Adrenal gland (tissue), 19 donors: ENCODE measurements at regions of chr2 and their contacts with region 1.

Region 1: DNA sequence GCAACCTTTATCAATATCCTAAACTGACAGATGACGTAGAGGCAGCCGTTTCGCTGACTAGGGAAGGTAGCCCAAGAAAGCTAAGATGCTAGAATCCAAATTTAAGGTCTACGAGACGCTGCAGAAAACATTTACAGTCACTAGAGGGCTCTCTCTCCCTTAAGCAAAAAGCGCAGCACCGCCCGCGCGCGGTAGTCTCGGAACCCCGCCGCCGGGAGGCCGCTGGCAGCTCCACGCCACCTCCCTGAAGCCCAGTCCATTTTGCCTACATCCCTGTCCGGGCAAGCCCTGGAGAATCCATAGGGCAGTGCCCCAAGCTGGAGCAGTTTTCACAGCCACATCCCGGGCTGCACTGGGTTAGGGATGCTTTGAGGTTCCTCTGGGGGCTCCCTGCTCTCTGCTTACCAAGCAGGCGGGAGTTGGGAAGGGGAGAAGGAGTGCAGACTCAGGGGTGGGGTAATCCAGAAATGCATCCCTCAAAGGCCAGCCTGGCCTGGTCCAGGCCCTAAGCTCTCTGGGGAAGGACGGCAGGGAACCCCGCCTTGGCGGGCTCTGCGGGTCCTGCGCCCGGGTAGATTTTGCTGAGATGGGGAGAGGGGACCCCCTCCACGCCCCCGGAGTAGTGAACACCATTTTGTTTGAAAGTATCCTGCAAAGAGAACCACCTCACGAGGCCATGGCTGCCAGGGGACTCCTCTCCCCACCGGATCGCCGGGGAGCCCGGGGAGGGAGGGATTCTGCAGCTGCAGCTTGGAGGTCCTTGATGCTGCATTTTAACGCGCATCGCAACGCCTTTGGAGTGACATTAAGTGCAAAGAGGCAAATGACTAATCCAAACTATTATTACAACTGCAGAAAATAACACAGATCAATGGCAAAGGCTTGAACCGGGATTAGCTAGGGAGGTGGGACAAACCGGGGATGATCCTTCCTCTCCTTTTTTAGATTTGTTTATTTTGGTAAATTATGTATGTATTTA is 1.3 kb upstream of the DPYSL5 start:
- DNase-seq: peak; percentile 55 to 84 (median 64)
- H3K4me3 ChIP-seq: no peak overlapping the region
- H3K27ac ChIP-seq: no peak overlapping the region
- H3K4me1 ChIP-seq: peaks cover 14 to 28% of the 10 kb centered on the region in 2 donors
- H3K27me3 ChIP-seq: peaks cover 64% of the 10 kb centered on the region
- CTCF ChIP-seq: peak; percentile 68 to 82 (median 78)
- POLR2A ChIP-seq: no peak

Region 2: GRCh38 chr2:26561918-26562810 is 284.5 kb before region 1 on chr2:
- intact Hi-C with region 1: no loop called
- DNase-seq: peak in 6 of 7 donors; percentile 33 to 57 (median 44)
- H3K4me3 ChIP-seq: peak overlapping the region in 1 of 4 donors; percentile 51
- H3K27ac ChIP-seq: no peak overlapping the region
- H3K4me1 ChIP-seq: peaks cover 0 to 8% of the 10 kb centered on the region in 2 donors
- H3K27me3 ChIP-seq: peaks cover 33% of the 10 kb centered on the region
- CTCF ChIP-seq: peak in 3 of 6 experiments; percentile 11 to 33 (median 27)
- POLR2A ChIP-seq: no peak

Region 3: GRCh38 chr2:26735096-26735495 is 111.5 kb before region 1 on chr2:
- intact Hi-C with region 1: no loop called
- DNase-seq: peak; percentile 69 to 89 (median 81)
- H3K4me3 ChIP-seq: no peak overlapping the region
- H3K27ac ChIP-seq: peak overlapping the region; percentile 83 to 94 (median 85)
- H3K4me1 ChIP-seq: peaks cover 21 to 30% of the 10 kb centered on the region in 2 donors
- H3K27me3 ChIP-seq: no peaks in the 10 kb centered on the region
- CTCF ChIP-seq: no peak
- POLR2A ChIP-seq: peak in 1 of 2 donors; percentile 35

Region 4: GRCh38 chr2:26942543-26943295 is 96.1 kb after region 1 on chr2:
- intact Hi-C with region 1: loop called (anchors 2 kb)
- DNase-seq: peak; percentile 50 to 89 (median 73)
- H3K4me3 ChIP-seq: no peak overlapping the region
- H3K27ac ChIP-seq: no peak overlapping the region
- H3K4me1 ChIP-seq: no peaks in the 10 kb centered on the region
- H3K27me3 ChIP-seq: peaks cover 10% of the 10 kb centered on the region
- CTCF ChIP-seq: peak; percentile 52 to 87 (median 74)
- POLR2A ChIP-seq: no peak

Region 5: GRCh38 chr2:26993768-26994167 is 147.2 kb after region 1 on chr2:
- intact Hi-C with region 1: no loop called
- DNase-seq: no peak
- H3K4me3 ChIP-seq: no peak overlapping the region
- H3K27ac ChIP-seq: no peak overlapping the region
- H3K4me1 ChIP-seq: no peaks in the 10 kb centered on the region
- H3K27me3 ChIP-seq: no peaks in the 10 kb centered on the region
- CTCF ChIP-seq: no peak
- POLR2A ChIP-seq: no peak